Dorsolateral prefrontal cortex (tissue), 120 donors: ENCODE measurements at regions of chr11 and their contacts with region 1.

Region 1: GRCh38 chr11:111829185-111829968 is 42.0 kb downstream of the ALG9 start:
- DNase-seq: no peak
- H3K4me3 ChIP-seq: no peak overlapping the region
- H3K27ac ChIP-seq: peak overlapping the region in 31 of 59 donors; percentile 0 to 68 (median 28)
- H3K27me3 ChIP-seq: no peaks in the 10 kb centered on the region
- CTCF ChIP-seq: no peak

Region 2: DNA sequence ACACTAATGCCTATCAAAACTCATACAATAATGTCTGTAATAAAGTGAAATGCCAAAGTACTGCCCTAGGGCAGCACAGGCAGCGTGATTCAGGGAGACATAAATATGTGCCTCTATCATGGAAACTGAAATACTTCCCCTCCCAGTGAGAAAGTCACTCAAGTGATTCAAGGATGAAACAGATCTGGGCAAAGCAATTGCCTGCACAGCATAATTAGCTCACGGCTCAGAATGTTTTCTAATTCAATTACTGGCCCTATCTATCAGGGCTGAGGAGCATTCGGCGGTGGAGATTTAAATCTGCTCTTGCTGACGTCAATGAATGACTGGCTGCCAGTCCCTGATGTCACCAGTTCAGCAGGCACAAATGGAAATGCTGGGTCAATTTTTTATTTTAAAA is 35.5 kb before region 1 on chr11:
- intact Hi-C with region 1: loop called in 1 of 2 experiments (anchors 5 kb)
- DNase-seq: peak in 1 of 10 donors; percentile 21
- H3K4me3 ChIP-seq: no peak overlapping the region
- H3K27ac ChIP-seq: peak overlapping the region in 15 of 59 donors; percentile 0 to 35 (median 19)
- H3K27me3 ChIP-seq: no peaks in the 10 kb centered on the region
- CTCF ChIP-seq: no peak

Region 3: GRCh38 chr11:111870886-111871692 is 41.7 kb after region 1 on chr11 and contains the start of gene ALG9:
- intact Hi-C with region 1: no loop called
- DNase-seq: peak; percentile 56 to 83 (median 79)
- H3K4me3 ChIP-seq: peak within 1 kb of the TSS; percentile 69 to 99 (median 89)
- H3K27ac ChIP-seq: peak within 1 kb of the TSS; percentile 52 to 99 (median 91)
- H3K27me3 ChIP-seq: no peaks in the 10 kb centered on the region
- CTCF ChIP-seq: peak in 31 of 56 donors; percentile 3 to 48 (median 23)
- total RNA-seq, gene ALG9: 27.6 to 49.9 (median 37.3) TPM

Region 4: GRCh38 chr11:111911563-111912401 is 82.4 kb after region 1 on chr11 and contains the start of gene CRYAB:
- intact Hi-C with region 1: no loop called
- DNase-seq: peak; percentile 87 to 97 (median 94)
- H3K4me3 ChIP-seq: peak within 1 kb of the TSS; percentile 44 to 88 (median 68)
- H3K27ac ChIP-seq: peak within 1 kb of the TSS; percentile 92 to 100 (median 99)
- H3K27me3 ChIP-seq: no peaks in the 10 kb centered on the region
- CTCF ChIP-seq: peak in 1 of 56 donors; percentile 7
- total RNA-seq, gene CRYAB: 265 to 3,917 (median 1,020) TPM